Aorta (tissue), 5 donors: ENCODE measurements at regions of chr11 and their contacts with region 1.

Region 1: GRCh38 chr11:64015935-64016845 is 19.5 kb upstream of the FLRT1 start:
- DNase-seq: no peak
- ATAC-seq: no peak
- H3K4me3 ChIP-seq: no peak overlapping the region
- H3K27ac ChIP-seq: no peak overlapping the region
- H3K4me1 ChIP-seq: no peaks in the 10 kb centered on the region
- H3K27me3 ChIP-seq: no peaks in the 10 kb centered on the region

Region 2: GRCh38 chr11:64134963-64135362 is 118.8 kb after region 1 on chr11:
- intact Hi-C with region 1: loop called in 1 of 2 experiments (anchors 5 kb)
- DNase-seq: no peak
- ATAC-seq: no peak
- H3K4me3 ChIP-seq: no peak overlapping the region
- H3K27ac ChIP-seq: no peak overlapping the region
- H3K4me1 ChIP-seq: no peaks in the 10 kb centered on the region
- H3K27me3 ChIP-seq: no peaks in the 10 kb centered on the region

Region 3: GRCh38 chr11:64246871-64247728 is 230.9 kb after region 1 on chr11 and contains the start of gene PPP1R14B:
- intact Hi-C with region 1: no loop called
- DNase-seq: peak; percentile 94 to 97
- ATAC-seq: peak; percentile 83
- H3K4me3 ChIP-seq: peak within 1 kb of the TSS; percentile 68 to 75
- H3K27ac ChIP-seq: peak within 1 kb of the TSS in 1 of 2 donors; percentile 56
- H3K4me1 ChIP-seq: no peaks in the 10 kb centered on the region
- H3K27me3 ChIP-seq: no peaks in the 10 kb centered on the region
- total RNA-seq, gene PPP1R14B: 110 to 146 TPM